HEK293 (cell line): ENCODE measurements at regions of chr6 and their contacts with region 1.

Region 1: GRCh38 chr6:72931325-72931887 is 293.9 kb downstream of the KHDC1L start:
- H3K4me3 ChIP-seq: no peak overlapping the region
- H3K27ac ChIP-seq: no peak overlapping the region
- H3K4me1 ChIP-seq: no peaks in the 10 kb centered on the region
- CTCF ChIP-seq: no peak

Region 2: GRCh38 chr6:72390548-72390947 is 540.9 kb before region 1 on chr6:
- CTCF ChIA-PET with region 1: interaction called, 10 read pairs
- POLR2A ChIA-PET with region 1: no interaction called
- H3K4me3 ChIP-seq: no peak overlapping the region
- H3K27ac ChIP-seq: no peak overlapping the region
- H3K4me1 ChIP-seq: no peaks in the 10 kb centered on the region
- CTCF ChIP-seq: no peak

Region 3: GRCh38 chr6:73129653-73130443 is 198.4 kb after region 1 on chr6:
- CTCF ChIA-PET with region 1: interaction called, 13 read pairs
- POLR2A ChIA-PET with region 1: no interaction called
- H3K4me3 ChIP-seq: no peak overlapping the region
- H3K27ac ChIP-seq: no peak overlapping the region
- H3K4me1 ChIP-seq: no peaks in the 10 kb centered on the region
- CTCF ChIP-seq: peak; percentile 91